Left cardiac atrium (tissue), 4 donors: ENCODE measurements at regions of chr15 and their contacts with region 1.

Region 1: DNA sequence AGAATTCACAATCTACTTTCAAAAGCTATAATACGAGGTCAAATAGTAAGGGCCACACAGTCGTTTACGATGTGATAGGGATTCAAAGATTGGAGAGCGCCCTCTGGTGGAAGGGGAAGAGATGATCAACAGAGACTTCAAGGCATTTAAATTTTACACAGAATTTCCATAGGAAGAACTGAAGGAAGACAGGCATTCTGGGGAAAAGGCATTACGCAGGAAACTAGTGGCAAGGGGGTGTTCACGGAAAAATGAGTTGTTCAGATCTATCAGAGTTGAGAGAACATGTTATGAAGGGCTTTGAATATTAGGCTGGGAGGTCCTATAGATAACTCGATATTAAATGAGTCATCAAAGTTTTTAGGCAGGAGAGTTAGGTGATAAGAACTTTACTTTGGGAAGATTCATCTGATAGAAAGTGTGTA is 128.7 kb downstream of the FRMD5 start:
- DNase-seq: peak; percentile 55
- ATAC-seq: peak; percentile 44 to 59

Region 2: GRCh38 chr15:43872416-43873020 is 193.8 kb before region 1 on chr15:
- intact Hi-C with region 1: loop called in 1 of 2 experiments (anchors 10 kb)
- DNase-seq: peak; percentile 46
- ATAC-seq: peak; percentile 82

Region 3: DNA sequence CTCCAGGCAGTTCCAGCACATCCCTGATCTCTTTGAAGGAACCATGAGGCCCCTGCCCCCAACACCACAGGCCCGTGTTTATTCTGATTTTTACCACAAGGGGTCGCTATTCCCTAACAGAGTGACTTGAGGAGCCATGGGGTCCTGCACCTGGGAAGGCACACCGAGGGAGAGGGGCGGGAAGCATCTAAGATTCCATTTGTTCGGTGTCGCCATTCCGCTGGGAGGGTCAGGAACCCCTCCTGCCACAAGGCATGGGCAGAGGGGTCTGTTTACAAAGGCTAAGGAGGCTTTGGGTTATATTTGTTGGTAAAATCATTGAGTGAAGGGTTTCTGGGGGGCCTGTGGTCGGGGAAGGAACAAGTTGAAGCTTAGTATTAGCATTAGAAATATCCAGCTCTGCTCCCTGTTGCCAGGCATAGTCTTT is 162.5 kb before region 1 on chr15:
- intact Hi-C with region 1: loop called (anchors 5 kb)
- DNase-seq: no peak
- ATAC-seq: peak; percentile 76 to 84

Region 4: DNA sequence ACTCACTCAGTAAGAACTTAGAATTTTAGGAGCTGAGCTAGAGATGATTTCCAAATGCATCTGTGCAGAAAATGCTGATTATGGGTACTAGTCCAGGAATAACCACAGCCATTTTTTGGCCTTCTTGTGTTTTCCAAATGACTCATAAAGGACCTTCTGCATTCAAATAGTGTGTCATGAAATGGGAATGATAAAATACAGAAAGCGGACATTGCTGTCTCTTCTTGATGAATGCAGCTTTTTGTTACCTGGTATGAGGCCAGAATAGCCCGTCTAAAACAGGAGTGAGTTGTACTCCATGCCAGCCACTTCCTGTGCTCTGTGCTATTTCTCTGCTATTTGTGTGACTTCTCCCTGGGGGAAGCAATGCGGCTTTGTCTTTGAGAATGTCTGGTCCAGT is 149.3 kb after region 1 on chr15:
- intact Hi-C with region 1: loop called in 1 of 2 experiments (anchors 2 kb)
- DNase-seq: no peak
- ATAC-seq: peak in 1 of 2 donors; percentile 48